ENCODE measurements at regions of chr17 and their contacts with region 1.

Region 1: GRCh38 chr17:68184816-68185436 is 62.9 kb upstream of the AMZ2 start:
- DNase-seq: peak; percentile 78
- H3K4me3 Mint-ChIP-seq: peak overlapping the region; percentile 50
- H3K27ac Mint-ChIP-seq: peak overlapping the region; percentile 77
- H3K4me1 Mint-ChIP-seq: peaks cover 80% of the 10 kb centered on the region
- H3K27me3 Mint-ChIP-seq: no peaks in the 10 kb centered on the region

Region 2: DNA sequence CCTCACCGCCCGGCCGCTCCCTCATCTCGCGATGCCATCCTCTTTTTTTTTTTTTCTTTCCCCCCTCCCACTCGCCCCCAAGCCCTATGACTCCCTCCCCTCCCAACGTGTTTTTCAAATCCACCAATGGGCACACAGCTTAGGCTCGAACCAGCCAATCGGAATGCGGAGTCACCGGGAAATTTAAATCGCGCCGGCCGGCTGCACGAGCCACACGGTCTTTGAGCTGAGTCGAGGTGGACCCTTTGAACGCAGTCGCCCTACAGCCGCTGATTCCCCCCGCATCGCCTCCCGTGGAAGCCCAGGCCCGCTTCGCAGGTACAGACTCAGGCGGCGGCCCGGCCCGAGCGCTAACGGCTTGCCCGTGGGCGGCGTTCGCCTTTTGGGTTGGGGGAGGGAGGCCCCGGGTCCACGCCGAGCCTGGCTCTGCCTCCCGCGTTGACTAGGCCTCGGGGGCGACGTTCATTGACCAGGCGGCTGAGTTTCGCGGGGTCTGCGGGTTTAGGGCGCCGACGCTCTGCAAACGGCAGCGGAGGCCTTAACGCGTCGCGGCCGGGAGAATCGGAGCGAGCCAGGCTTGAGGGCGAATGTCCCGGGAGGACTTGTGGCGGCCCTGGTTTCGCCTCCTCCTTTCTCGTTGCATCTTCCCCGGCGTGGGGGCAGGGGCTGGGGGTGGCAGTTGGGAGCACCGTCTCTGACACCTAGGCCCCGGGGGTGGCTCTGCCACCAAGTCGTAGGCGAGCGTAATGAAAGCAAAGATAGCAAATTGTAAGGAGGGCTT is 149.2 kb before region 1 on chr17 and contains the start of gene KPNA2:
- CTCF ChIA-PET with region 1: no interaction called
- POLR2A ChIA-PET with region 1: no interaction called
- intact Hi-C with region 1: loop called (anchors 5 kb)
- DNase-seq: peak; percentile 95
- H3K4me3 Mint-ChIP-seq: peak within 1 kb of the TSS; percentile 95
- H3K27ac Mint-ChIP-seq: peak within 1 kb of the TSS; percentile 95
- H3K4me1 Mint-ChIP-seq: peaks cover 21% of the 10 kb centered on the region
- H3K27me3 Mint-ChIP-seq: no peaks in the 10 kb centered on the region
- total RNA-seq, gene KPNA2: 225 to 229 TPM

Region 3: DNA sequence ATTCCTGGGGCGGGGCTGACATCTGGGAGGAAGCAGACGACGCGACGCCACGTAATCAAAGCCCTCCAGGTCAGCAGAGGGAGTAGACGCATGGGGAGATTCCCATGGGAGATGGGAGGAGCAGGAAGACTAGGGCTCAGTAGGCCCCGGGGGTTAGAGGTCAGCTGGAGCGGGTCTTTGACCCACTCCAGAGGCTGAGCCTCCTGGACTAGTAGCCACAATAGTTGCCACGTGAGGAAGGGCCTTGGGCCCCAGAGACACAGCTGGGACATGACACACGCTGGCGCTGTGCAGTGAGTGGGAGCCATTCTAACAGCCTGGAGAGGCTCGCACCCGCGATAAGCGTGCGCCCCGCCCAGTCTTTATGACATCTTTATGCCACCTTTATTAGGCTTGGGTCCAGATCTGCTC is 32.8 kb before region 1 on chr17:
- CTCF ChIA-PET with region 1: no interaction called
- POLR2A ChIA-PET with region 1: no interaction called
- intact Hi-C with region 1: no loop called
- DNase-seq: no peak
- H3K4me3 Mint-ChIP-seq: no peak overlapping the region
- H3K27ac Mint-ChIP-seq: no peak overlapping the region
- H3K4me1 Mint-ChIP-seq: no peaks in the 10 kb centered on the region
- H3K27me3 Mint-ChIP-seq: no peaks in the 10 kb centered on the region

Region 4: GRCh38 chr17:68196944-68197595 is 12.1 kb after region 1 on chr17:
- CTCF ChIA-PET with region 1: interaction called, 107 read pairs
- POLR2A ChIA-PET with region 1: interaction called, 58 read pairs
- intact Hi-C with region 1: loop called (anchors 1 kb)
- DNase-seq: peak; percentile 66
- H3K4me3 Mint-ChIP-seq: peak overlapping the region; percentile 70
- H3K27ac Mint-ChIP-seq: no peak overlapping the region
- H3K4me1 Mint-ChIP-seq: peaks cover 35% of the 10 kb centered on the region
- H3K27me3 Mint-ChIP-seq: peaks cover 13% of the 10 kb centered on the region

Region 5: DNA sequence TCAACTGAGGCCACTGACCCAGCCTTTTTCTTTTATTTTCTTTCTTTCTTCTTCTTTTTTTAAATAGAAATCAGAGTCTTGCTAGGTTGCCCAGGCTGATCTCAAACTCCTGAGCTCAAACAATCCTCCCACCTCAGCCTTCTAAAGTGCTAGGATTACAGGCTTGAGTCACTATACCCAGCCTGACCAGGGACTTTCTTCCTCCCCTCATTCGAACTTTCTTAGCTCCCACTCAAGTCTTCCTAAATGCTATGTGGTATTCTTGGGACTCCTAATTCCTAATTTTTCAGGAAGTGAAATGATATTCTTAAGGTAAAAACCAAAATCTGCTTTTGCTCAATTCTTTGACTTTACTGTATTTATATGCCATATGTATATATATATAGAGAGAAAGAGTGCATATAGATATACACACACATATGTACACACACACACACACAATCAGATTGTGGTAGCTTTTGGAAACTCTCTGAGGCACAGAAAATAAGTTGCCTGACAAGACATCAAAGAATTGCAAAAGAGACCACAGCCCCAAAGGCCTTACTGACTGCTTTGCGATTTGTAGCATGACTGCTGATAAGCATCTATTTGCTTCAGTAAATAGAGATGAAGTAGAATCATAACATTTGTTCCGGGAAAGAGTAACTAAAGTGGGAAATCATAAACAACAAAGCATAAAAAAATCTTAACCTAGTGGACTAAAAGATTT is 53.4 kb after region 1 on chr17:
- CTCF ChIA-PET with region 1: no interaction called
- POLR2A ChIA-PET with region 1: no interaction called
- intact Hi-C with region 1: loop called (anchors 2 kb)
- DNase-seq: peak; percentile 38
- H3K4me3 Mint-ChIP-seq: peak overlapping the region; percentile 73
- H3K27ac Mint-ChIP-seq: peak overlapping the region; percentile 96
- H3K4me1 Mint-ChIP-seq: peaks cover 53% of the 10 kb centered on the region
- H3K27me3 Mint-ChIP-seq: no peaks in the 10 kb centered on the region

Region 6: DNA sequence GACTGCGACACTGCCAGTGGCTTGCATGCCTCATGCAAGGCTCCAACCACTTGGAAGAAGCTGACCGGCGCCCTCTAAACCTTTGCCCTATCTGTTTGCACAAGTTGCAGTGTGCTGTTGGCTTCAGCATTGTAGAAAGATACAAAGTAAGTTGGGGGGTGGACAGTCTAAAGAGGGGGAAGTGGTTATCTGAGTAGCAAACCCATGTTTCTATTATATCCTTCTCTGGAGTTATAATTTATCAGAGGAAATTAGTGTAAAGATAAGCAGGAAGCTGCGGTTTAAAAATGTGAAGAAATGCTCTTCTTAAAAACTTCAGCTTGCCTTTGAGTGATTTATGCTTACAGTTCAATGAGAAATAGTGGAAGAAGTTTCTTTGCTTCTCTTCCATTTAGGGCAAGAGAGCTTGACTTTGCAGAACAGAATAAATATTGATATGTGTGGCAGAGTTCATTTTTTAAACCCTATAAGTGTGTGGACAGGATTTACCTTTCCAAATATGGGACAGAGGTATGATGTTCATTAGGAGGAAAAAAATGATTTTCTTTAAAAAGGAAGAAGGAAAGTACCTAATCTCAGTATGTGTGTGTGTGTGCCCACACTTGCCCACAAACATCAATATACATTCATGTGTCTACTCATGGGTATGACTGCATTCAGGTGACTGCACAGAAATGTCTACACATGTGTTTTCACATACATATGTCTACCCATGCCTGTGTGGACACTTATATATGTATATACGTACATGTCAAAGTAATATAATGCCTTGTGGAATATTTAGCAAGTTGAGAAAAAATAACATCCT is 71.0 kb after region 1 on chr17:
- CTCF ChIA-PET with region 1: no interaction called
- POLR2A ChIA-PET with region 1: no interaction called
- intact Hi-C with region 1: loop called (anchors 1 kb)
- DNase-seq: peak; percentile 50
- H3K4me3 Mint-ChIP-seq: peak overlapping the region; percentile 5
- H3K27ac Mint-ChIP-seq: peak overlapping the region; percentile 84
- H3K4me1 Mint-ChIP-seq: peaks cover 84% of the 10 kb centered on the region
- H3K27me3 Mint-ChIP-seq: no peaks in the 10 kb centered on the region

Region 7: GRCh38 chr17:68356520-68356919 is 171.6 kb after region 1 on chr17:
- CTCF ChIA-PET with region 1: no interaction called
- POLR2A ChIA-PET with region 1: no interaction called
- intact Hi-C with region 1: loop called (anchors 5 kb)
- DNase-seq: peak; percentile 84
- H3K4me3 Mint-ChIP-seq: peak overlapping the region; percentile 40
- H3K27ac Mint-ChIP-seq: peak overlapping the region; percentile 68
- H3K4me1 Mint-ChIP-seq: peaks cover 54% of the 10 kb centered on the region
- H3K27me3 Mint-ChIP-seq: no peaks in the 10 kb centered on the region

Measured in activated CD4-positive, alpha-beta memory T cell treated with anti-CD3 and anti-CD28 coated beads for 36 hours (primary cell).